OCI-LY7 (cell line): ENCODE measurements at regions of chr15 and their contacts with region 1.

Region 1: DNA sequence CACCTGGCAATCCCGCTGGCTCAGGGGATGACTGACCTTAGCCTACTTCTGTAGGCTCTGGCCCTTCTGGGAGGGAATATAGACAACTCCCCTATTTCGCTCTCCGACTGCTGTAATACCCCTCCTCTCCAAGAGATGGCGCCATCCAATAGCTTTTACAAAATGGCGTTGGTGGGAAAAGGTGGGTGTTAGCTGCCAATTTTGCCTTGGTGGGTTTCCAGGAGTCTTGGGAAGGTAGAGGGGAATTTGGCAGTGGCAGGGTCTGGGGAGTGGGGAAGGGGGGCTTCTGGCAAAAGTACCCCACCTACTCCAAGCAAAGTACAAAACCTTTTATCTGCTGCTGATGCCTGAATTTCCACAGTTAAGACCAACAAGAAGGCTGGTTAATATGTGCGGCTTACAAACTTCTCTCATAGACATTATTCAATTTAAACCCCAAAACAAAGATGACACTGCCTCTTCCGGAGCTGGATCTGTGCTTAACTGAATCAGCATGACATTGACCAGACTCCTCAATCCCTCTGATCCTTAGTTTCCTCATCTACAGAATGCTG is 62.1 kb downstream of the RASGRF1 start:
- DNase-seq: peak; percentile 68
- H3K4me3 ChIP-seq: no peak overlapping the region
- H3K27ac ChIP-seq: no peak overlapping the region
- H3K4me1 ChIP-seq: peaks cover 6% of the 10 kb centered on the region
- CTCF ChIP-seq: peak; percentile 99

Region 2: DNA sequence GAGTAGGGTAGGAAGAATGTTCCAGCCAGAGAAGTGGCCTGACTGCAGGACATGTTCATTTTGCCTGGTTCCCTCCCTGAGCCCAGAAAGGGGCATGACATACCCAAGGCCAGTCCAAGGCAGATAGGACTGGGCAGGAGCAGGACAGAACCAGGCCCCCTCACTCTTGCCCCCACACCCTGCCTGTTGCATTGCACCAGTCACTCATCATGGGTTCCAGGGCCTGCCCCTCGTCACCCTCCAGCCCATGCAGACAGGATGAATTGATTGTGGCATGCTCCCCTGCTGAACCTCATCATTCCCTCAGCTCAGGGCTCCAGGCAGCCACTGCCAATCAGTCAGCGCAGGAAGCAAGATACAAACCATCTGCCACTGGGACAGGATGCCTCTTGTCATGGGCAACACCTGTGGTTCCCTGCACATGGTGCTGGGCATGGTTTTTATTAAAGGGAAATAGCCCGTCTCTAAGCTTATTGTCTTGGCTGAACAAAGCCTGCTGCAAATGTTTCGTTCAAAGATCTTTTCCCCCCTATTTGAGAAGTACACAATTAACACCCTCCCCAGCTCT is 13.2 kb after region 1 on chr15:
- CTCF ChIA-PET with region 1: no interaction called
- POLR2A ChIA-PET with region 1: no interaction called
- intact Hi-C with region 1: no loop called
- DNase-seq: no peak
- H3K4me3 ChIP-seq: no peak overlapping the region
- H3K27ac ChIP-seq: no peak overlapping the region
- H3K4me1 ChIP-seq: no peaks in the 10 kb centered on the region
- CTCF ChIP-seq: no peak

Region 3: DNA sequence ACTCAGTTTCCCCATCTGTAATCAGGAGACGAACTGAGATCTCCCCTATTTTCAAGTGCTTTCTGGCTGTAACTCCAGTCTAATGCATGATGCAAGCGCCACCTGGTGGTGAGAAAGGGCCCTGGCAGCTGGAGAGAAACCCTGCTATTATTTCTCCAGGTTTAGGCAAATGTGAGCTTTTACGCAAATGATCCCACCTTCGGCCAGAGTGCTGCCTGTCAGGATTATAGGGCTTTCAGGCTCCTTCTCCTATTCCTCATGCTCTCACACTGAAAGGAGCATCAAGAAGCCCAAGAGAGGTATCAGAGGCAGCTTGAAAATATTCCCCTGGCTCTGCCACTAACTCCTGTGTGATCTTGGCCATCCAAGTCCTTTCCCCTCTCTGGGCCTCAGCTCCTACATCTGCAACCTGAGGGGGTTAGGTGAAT is 156.0 kb after region 1 on chr15:
- CTCF ChIA-PET with region 1: interaction called, 16 read pairs
- POLR2A ChIA-PET with region 1: no interaction called
- intact Hi-C with region 1: loop called (anchors 1 kb)
- DNase-seq: peak; percentile 81
- H3K4me3 ChIP-seq: no peak overlapping the region
- H3K27ac ChIP-seq: no peak overlapping the region
- H3K4me1 ChIP-seq: no peaks in the 10 kb centered on the region
- CTCF ChIP-seq: peak; percentile 100

Region 4: DNA sequence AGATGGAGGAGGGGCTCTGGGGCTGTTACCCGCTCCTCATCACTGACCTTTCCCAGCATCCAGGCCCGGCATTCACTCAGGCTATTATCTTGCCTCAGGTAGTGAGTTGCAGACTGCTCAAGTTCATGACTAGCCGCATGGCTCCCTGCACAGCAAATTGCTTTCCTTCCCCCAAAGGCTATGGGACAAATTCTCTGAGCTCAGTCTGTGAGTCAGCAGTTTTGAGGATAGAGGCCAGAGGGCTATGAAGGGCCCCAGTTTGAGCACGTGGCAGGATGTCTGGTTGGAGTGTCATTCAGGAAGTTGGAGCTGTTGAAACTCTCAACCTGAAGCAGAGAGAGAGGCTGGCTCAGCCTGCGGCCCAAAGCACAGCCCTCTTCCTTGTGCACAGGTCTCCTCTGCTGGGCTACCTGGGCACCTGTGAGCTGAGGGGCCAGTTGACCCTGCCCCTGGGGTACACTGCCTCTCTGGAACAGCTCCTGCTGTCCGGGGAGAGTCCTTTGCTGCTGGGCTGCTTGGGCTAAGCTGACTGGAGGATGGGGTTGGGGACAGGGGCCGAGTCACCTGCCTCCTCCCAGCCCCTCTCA is 1132.2 kb after region 1 on chr15:
- CTCF ChIA-PET with region 1: no interaction called
- POLR2A ChIA-PET with region 1: no interaction called
- intact Hi-C with region 1: no loop called
- DNase-seq: peak; percentile 75
- H3K4me3 ChIP-seq: no peak overlapping the region
- H3K27ac ChIP-seq: peak overlapping the region; percentile 22
- H3K4me1 ChIP-seq: peaks cover 21% of the 10 kb centered on the region
- CTCF ChIP-seq: no peak